Adrenal gland (tissue), 19 donors: ENCODE measurements at regions of chr6 and their contacts with region 1.

Region 1: GRCh38 chr6:138428944-138429598 is 25.0 kb downstream of the HEBP2 start:
- DNase-seq: peak in 1 of 7 donors; percentile 26
- H3K4me3 ChIP-seq: no peak overlapping the region
- H3K27ac ChIP-seq: no peak overlapping the region
- H3K4me1 ChIP-seq: no peaks in the 10 kb centered on the region
- H3K27me3 ChIP-seq: no peaks in the 10 kb centered on the region
- CTCF ChIP-seq: peak; percentile 29 to 70 (median 62)
- POLR2A ChIP-seq: no peak

Region 2: DNA sequence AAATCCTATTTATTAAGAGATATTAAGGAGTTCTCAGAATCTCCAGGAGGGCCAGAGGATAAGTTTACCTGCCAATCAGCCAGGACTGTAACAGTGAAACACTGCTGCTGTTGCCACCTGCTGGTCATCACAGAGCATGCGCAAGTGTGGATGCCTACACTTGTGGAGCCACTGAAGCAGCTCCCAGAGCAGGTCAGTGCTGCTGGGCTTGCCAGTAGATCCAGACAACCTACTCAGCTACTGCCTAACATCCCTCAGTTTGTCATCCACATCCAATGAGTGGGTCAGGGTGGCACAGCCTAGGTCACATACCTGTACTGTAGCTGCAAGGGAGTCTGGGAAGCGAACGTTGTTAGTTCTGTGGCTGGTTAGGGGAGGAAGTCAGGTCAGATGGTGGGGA is 88.6 kb after region 1 on chr6:
- intact Hi-C with region 1: loop called (anchors 2 to 5 kb)
- DNase-seq: peak in 6 of 7 donors; percentile 22 to 55 (median 36)
- H3K4me3 ChIP-seq: no peak overlapping the region
- H3K27ac ChIP-seq: no peak overlapping the region
- H3K4me1 ChIP-seq: no peaks in the 10 kb centered on the region
- H3K27me3 ChIP-seq: no peaks in the 10 kb centered on the region
- CTCF ChIP-seq: peak; percentile 22 to 54 (median 40)
- POLR2A ChIP-seq: no peak

Region 3: GRCh38 chr6:138545621-138545980 is 116.5 kb after region 1 on chr6:
- intact Hi-C with region 1: no loop called
- DNase-seq: peak in 4 of 7 donors; percentile 29 to 55 (median 30)
- H3K4me3 ChIP-seq: no peak overlapping the region
- H3K27ac ChIP-seq: peak overlapping the region in 1 of 5 donors; percentile 55
- H3K4me1 ChIP-seq: no peaks in the 10 kb centered on the region
- H3K27me3 ChIP-seq: no peaks in the 10 kb centered on the region
- CTCF ChIP-seq: no peak
- POLR2A ChIP-seq: peak in 1 of 2 donors; percentile 15

Region 4: DNA sequence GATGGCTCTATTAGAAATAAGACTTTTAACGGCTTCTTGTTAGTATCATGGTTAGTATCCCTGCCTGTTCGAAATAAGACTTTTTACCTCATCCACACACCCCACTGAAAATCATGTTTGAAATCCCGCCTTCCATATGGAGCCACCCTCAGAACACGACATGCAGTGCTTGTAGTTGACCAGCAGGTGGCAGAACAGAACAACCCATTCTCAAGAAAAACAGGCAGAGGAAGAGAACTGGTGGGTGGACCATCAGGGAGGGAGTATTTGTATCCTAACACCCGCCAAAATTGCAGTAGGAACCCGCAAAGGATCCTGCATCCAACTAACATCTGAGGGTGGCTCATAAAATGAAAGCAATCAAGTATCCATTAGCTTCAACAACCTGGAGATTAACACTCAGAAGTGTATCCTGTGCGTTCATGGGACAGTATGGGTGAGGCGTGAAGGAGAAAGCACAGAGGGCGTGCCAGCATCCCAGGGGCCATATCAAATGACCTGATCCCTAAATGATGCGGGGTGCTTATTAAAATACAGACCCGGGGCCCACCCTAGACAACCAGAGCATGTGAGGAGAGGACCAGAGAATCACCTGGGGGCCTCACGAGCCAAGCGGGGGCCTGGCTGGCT is 159.8 kb after region 1 on chr6:
- intact Hi-C with region 1: loop called (anchors 2 to 10 kb)
- DNase-seq: peak; percentile 49 to 76 (median 58)
- H3K4me3 ChIP-seq: no peak overlapping the region
- H3K27ac ChIP-seq: no peak overlapping the region
- H3K4me1 ChIP-seq: peaks cover 5 to 23% of the 10 kb centered on the region in 2 donors
- H3K27me3 ChIP-seq: no peaks in the 10 kb centered on the region
- CTCF ChIP-seq: peak; percentile 85 to 95 (median 90)
- POLR2A ChIP-seq: no peak